GM23248 (cell line): ENCODE measurements at regions of chr21 and their contacts with region 1.

Region 1: DNA sequence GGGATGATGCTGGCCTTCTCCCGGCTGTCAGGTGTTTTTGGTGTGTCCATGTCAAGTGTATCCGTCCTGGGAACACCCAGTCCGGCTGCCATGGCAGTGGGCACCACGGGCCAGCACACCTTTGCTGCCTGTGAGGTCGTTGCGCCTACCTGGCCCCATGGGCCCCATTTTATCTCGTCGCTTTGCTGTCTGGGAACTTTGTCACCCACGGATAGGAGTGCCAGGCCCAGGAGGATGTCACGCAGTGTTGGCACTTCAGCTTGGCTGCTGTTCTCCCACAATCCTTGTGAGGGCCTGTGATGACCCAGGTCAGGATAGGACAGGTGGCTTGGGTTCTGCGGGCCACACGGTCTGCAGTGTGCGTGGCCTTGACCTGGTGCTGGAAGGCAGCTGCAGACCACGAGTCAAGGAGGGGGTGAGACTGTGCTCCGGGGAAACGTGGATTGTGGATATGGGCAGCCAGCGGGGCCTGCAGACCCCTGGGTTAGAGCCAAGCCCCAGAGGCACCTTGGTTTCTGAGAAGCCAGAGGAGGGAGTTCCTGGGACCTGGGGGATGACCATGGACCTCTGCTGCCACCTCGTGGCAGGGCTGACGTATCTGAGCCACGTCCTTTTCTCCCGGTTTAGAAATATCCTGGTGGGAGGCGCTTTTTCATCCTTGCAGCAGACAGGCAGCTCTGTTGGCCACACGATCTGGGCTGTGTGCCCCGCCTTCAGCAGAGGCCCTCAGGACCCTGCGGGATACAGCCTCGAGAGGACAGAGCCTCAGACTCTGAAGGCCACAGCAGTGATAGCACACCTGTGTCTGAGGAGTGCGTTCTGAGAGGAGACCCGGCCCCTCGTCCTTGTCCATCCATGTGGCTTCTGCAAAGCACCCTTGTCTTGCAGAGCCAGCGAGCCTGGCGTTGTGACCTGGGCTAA is 161.1 kb upstream of the COL6A1 start:
- DNase-seq: peak; percentile 90
- H3K4me3 ChIP-seq: no peak overlapping the region
- H3K27ac ChIP-seq: no peak overlapping the region
- H3K4me1 ChIP-seq: peaks cover 15% of the 10 kb centered on the region
- H3K27me3 ChIP-seq: peaks cover 2% of the 10 kb centered on the region; the same call in 1 of the 2 replicates

Region 2: GRCh38 chr21:45560106-45561021 is 260.1 kb before region 1 on chr21:
- in situ Hi-C with region 1: loop called (anchors 10 kb)
- DNase-seq: no peak
- H3K4me3 ChIP-seq: no peak overlapping the region
- H3K27ac ChIP-seq: no peak overlapping the region
- H3K4me1 ChIP-seq: no peaks in the 10 kb centered on the region
- H3K27me3 ChIP-seq: peaks cover 32% of the 10 kb centered on the region

Region 3: GRCh38 chr21:45923146-45923545 is 102.7 kb after region 1 on chr21:
- in situ Hi-C with region 1: loop called (anchors 10 kb)
- DNase-seq: peak; percentile 87
- H3K4me3 ChIP-seq: no peak overlapping the region
- H3K27ac ChIP-seq: no peak overlapping the region
- H3K4me1 ChIP-seq: no peaks in the 10 kb centered on the region
- H3K27me3 ChIP-seq: peaks cover 3% of the 10 kb centered on the region; the same call in 1 of the 2 replicates